ENCODE measurements at regions of chr6 and their contacts with region 1.

Region 1: DNA sequence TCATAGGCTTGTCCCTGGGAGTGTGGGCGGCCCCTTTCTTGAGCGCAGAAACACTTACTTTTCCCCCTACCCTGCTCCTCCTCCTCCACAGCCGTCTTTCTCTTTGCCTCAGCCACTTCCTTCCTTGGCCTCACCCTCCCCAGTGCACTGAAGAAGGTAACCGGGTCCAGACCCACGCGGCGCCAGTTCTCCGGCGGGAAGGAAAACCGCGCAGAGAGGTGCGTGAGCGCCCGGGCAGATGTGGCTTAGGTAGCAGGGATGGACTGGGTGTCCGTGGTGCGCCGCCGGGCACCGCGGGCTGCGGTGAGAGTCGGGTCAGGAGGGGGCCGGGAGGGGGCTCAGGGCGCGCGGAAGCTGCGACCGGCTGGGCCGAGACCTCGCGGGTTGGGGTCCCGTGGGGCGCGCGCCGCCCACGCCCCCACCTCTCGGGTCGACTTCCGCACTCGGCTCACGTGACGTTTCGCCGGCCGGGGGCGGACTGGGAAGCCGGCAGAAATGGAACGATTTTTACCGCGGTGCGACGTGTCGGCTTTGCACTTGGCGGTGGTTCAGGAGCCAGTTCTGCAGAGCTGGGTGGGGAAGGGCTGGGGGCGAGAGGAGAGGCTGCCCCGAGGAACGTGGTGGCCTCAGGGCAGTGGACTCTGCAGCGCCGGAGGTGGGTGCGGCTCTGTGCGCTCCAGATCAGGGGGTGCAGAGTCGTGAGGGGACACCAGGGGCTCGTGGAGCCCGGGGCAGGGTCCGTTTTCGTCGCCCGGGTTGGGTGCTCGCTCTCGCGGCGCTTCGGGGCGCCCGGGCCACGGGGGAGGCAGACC is at the start of gene ABRACL:
- DNase-seq: peak; percentile 93
- ATAC-seq: peak; percentile 85
- H3K4me3 Mint-ChIP-seq: no peak within 1 kb of the TSS
- H3K27ac Mint-ChIP-seq: peak within 1 kb of the TSS; percentile 93
- H3K4me1 Mint-ChIP-seq: peaks cover 23% of the 10 kb centered on the region
- H3K27me3 Mint-ChIP-seq: no peaks in the 10 kb centered on the region
- total RNA-seq, gene ABRACL: 92.5 to 180 TPM

Region 2: GRCh38 chr6:138773177-138774091 is 255.4 kb before region 1 on chr6 and contains the start of gene CCDC28A:
- CTCF ChIA-PET with region 1: no interaction called
- POLR2A ChIA-PET with region 1: no interaction called
- intact Hi-C with region 1: loop called in 1 of 2 experiments (anchors 1 kb)
- DNase-seq: peak; percentile 95
- ATAC-seq: peak; percentile 91
- H3K4me3 Mint-ChIP-seq: peak within 1 kb of the TSS; percentile 84
- H3K27ac Mint-ChIP-seq: peak within 1 kb of the TSS; percentile 98
- H3K4me1 Mint-ChIP-seq: peaks cover 31% of the 10 kb centered on the region
- H3K27me3 Mint-ChIP-seq: no peaks in the 10 kb centered on the region
- total RNA-seq, gene CCDC28A: 14.8 to 16.8 TPM

Region 3: DNA sequence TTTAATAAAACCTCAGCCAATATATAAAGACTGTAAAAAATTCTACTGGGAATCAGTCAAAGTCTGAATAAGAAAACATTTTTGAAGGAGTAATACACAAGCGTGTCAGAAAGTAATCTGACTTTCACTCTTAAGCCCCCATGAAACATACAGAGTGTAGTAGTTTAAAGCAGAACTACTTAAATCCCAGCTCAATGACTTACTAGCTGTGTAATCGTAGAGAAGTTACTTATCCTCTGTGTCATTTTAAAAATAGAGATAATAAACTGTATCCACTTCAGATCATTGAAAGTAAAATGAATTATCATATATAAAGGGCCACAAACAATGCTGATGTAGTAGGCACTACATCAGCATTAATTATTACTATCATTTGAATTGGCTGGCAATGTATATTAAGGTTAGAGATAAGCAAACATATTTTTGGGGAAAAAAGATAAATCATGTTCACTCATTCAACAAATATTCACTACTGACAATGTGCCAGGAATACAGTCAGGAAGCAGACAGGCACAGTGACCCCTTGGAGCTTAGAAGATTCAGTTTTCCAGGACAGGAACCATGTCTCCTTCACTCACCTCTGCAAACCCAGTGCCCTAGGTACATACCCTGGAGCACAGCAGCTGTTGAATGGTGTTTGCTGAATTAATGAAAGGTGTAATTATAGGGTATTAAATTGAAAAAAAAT is 55.3 kb before region 1 on chr6:
- CTCF ChIA-PET with region 1: no interaction called
- POLR2A ChIA-PET with region 1: no interaction called
- intact Hi-C with region 1: no loop called
- DNase-seq: no peak
- ATAC-seq: no peak
- H3K4me3 Mint-ChIP-seq: no peak overlapping the region
- H3K27ac Mint-ChIP-seq: no peak overlapping the region
- H3K4me1 Mint-ChIP-seq: peaks cover 71% of the 10 kb centered on the region
- H3K27me3 Mint-ChIP-seq: no peaks in the 10 kb centered on the region

Region 4: GRCh38 chr6:139060332-139060731 is 31.5 kb after region 1 on chr6:
- CTCF ChIA-PET with region 1: no interaction called
- POLR2A ChIA-PET with region 1: no interaction called
- intact Hi-C with region 1: loop called in 1 of 2 experiments (anchors 1 kb)
- DNase-seq: peak; percentile 47
- ATAC-seq: peak; percentile 85
- H3K4me3 Mint-ChIP-seq: no peak overlapping the region
- H3K27ac Mint-ChIP-seq: no peak overlapping the region
- H3K4me1 Mint-ChIP-seq: peaks cover 8% of the 10 kb centered on the region
- H3K27me3 Mint-ChIP-seq: no peaks in the 10 kb centered on the region

Region 5: DNA sequence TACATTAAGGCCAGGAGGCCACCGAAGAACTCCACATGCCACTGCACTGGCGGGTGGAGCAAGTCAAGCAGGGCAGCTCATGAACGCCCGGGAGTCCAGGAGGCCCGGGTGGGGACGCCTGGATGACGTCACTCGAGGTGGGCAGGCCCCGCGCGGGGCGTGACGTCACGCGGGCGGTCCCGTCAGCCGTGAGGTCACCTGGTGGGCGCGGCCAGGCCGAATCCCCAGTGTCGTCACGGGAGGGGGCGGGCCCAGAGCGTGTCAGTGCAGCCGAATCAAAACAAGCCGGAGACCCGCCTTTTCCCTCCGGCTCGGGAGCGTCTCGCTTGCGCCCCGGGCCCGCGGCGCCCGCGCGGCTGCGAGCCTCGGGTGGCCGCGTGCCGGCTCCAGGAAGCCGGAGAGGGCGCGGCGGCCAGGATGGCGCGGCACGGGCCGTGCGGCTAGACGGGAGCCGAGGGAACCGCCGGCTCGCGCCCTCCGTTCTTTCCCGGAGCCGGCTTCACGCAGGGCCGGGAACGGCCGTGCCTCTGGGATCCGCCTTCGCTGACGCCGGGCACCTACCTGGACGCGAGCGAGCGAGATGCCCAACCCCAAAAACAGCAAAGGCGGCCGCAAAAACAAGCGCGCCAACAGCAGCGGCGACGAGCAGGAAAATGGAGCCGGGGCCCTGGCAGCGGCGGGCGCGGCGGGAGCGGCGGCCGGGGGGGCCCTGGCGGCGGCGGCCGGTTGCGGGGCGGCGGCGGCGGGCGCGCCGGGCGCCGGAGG is 106.1 kb after region 1 on chr6 and contains the start of gene HECA:
- CTCF ChIA-PET with region 1: interaction called, 3 read pairs
- POLR2A ChIA-PET with region 1: interaction called, 3 read pairs
- intact Hi-C with region 1: loop called in 1 of 2 experiments (anchors 1 kb)
- DNase-seq: peak; percentile 100
- ATAC-seq: peak; percentile 70
- H3K4me3 Mint-ChIP-seq: peak within 1 kb of the TSS; percentile 93
- H3K27ac Mint-ChIP-seq: peak within 1 kb of the TSS; percentile 98
- H3K4me1 Mint-ChIP-seq: peaks cover 49% of the 10 kb centered on the region
- H3K27me3 Mint-ChIP-seq: no peaks in the 10 kb centered on the region
- total RNA-seq, gene HECA: 51.6 to 63.4 TPM

Region 6: GRCh38 chr6:139262519-139263300 is 233.8 kb after region 1 on chr6:
- CTCF ChIA-PET with region 1: no interaction called
- POLR2A ChIA-PET with region 1: no interaction called
- intact Hi-C with region 1: loop called in 1 of 2 experiments (anchors 1 kb)
- DNase-seq: peak; percentile 56
- ATAC-seq: peak; percentile 97
- H3K4me3 Mint-ChIP-seq: peak overlapping the region; percentile 65
- H3K27ac Mint-ChIP-seq: peak overlapping the region; percentile 93
- H3K4me1 Mint-ChIP-seq: peaks cover 38% of the 10 kb centered on the region
- H3K27me3 Mint-ChIP-seq: no peaks in the 10 kb centered on the region

Measured in activated CD4-positive, alpha-beta T cell treated with anti-CD3 and anti-CD28 coated beads for 36 hours (primary cell).